ENCODE measurements at regions of chr2 and their contacts with region 1.

Region 1: GRCh38 chr2:120312861-120313694 is 32.9 kb upstream of the INHBB start:
- DNase-seq: peak; percentile 77
- H3K4me3 ChIP-seq: no peak overlapping the region
- H3K27ac ChIP-seq: no peak overlapping the region
- H3K4me1 ChIP-seq: peaks cover 26% of the 10 kb centered on the region
- CTCF ChIP-seq: peak; percentile 92

Region 2: DNA sequence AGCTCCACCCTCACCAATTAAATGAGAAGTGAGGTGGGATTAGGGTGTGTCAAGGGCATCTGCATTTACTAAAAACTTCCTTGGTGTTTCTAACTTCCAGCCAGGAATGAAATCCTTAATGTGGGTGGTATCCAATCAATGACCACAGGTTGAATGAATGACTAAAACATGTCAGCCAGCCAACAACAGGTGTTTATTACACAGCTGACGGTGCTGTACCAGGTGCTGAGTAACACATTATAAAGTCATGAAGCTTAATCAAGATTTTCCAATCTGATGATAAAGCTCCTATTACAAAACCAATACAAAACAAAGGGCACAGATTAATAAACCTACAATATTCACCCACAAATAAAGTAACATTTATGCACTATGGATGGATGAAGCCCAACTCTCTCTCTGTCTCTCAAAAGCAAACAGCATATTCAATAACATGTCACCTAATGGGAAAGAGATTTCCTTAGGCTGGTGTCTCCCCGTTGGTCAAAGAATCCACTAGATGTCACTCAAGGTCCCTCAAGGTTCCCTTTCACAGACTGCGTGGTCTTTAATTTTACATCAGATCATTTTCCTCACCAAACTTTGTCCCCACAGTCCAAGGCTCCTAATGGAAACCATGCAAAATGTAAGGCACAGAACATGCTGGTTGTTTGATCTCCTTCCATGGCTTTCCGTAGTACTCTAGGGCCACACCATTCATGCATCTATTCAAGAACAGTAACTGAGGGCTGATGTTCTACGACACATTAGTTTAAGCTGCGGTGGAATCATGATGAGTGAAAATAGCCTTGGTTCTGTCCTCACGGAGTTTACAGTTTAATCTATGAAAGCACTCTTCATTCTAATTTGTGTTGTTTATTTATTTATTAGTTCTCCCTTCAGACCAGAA is 559.8 kb before region 1 on chr2:
- CTCF ChIA-PET with region 1: no interaction called
- POLR2A ChIA-PET with region 1: no interaction called
- intact Hi-C with region 1: loop called (anchors 2 kb)
- DNase-seq: peak; percentile 65
- H3K4me3 ChIP-seq: no peak overlapping the region
- H3K27ac ChIP-seq: no peak overlapping the region
- H3K4me1 ChIP-seq: no peaks in the 10 kb centered on the region
- CTCF ChIP-seq: peak; percentile 89

Region 3: DNA sequence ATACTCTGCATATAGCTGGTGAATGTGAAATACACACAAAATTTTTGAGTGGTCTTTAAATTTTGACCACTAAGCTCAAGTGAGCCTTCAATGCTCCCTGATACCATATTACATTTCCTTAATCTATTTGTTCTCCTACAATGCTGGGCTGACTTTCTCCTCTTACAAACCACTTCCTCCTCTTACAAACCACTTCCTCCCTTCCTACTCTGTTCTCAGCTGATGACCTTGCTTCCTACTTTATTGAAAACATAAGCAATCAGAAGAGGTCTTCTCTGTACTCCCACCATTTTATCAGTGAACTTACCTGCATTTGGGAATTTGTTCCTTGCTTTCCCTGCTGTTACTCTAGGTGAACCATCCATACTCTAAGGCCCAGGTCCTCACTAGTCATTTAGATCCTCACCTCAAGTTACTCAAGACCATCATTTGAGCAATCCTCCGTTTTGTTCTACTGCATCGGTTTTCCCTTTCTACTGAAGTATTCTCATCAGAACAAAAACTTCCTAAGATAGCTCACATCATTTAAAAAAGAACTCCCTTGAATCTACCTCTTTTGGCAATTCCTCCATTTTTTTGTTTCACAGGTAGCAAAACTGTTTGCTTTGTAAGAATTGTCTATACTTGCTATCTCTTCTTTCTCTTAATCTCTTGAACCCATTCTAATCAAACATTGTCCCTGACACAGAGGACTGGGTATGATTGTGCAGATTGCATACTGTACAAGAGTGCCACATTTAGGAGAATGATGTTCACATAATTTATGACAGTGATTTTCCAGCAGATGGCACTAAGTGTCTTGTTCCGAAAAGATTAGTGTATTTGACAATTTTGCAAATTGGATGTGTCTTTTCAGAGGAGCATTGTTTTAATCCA is 203.7 kb before region 1 on chr2:
- CTCF ChIA-PET with region 1: no interaction called
- POLR2A ChIA-PET with region 1: no interaction called
- intact Hi-C with region 1: loop called (anchors 1 kb)
- DNase-seq: peak; percentile 68
- H3K4me3 ChIP-seq: peak overlapping the region; percentile 17
- H3K27ac ChIP-seq: no peak overlapping the region
- H3K4me1 ChIP-seq: peaks cover 17% of the 10 kb centered on the region
- CTCF ChIP-seq: peak; percentile 86

Region 4: DNA sequence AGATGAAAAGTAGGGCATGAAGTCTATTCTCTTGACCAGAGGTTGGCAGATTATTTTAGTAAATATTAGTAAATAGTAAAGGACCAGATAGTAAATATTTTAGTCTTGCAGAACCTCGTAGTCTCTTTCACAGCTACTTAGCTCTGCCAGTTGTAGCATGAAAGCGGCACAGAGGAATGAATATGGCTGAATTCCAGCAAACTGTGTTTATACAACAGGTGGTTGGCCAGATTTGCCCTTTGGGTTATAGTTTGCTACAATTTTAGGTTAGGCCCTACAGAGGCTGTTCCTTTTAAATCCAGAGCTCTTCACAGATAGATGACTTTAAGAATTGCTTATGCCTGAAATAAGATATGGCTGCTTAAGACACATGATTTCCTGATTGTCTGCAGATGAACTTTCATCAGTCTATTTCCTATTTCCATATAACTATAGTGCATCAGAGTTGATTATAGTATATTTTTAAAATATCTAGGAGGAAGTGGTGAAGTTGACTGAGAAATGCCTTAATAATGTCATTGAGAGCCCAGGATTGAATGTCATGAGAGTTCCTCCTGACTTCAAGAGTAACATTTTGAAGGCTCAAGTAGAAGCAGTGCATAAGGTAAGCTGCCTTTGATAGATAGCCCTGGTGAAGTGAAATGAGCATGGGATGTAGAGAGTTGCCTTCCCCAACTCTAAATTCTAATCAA is 170.4 kb before region 1 on chr2:
- CTCF ChIA-PET with region 1: no interaction called
- POLR2A ChIA-PET with region 1: no interaction called
- intact Hi-C with region 1: no loop called
- DNase-seq: no peak
- H3K4me3 ChIP-seq: no peak overlapping the region
- H3K27ac ChIP-seq: no peak overlapping the region
- H3K4me1 ChIP-seq: no peaks in the 10 kb centered on the region
- CTCF ChIP-seq: no peak

Region 5: DNA sequence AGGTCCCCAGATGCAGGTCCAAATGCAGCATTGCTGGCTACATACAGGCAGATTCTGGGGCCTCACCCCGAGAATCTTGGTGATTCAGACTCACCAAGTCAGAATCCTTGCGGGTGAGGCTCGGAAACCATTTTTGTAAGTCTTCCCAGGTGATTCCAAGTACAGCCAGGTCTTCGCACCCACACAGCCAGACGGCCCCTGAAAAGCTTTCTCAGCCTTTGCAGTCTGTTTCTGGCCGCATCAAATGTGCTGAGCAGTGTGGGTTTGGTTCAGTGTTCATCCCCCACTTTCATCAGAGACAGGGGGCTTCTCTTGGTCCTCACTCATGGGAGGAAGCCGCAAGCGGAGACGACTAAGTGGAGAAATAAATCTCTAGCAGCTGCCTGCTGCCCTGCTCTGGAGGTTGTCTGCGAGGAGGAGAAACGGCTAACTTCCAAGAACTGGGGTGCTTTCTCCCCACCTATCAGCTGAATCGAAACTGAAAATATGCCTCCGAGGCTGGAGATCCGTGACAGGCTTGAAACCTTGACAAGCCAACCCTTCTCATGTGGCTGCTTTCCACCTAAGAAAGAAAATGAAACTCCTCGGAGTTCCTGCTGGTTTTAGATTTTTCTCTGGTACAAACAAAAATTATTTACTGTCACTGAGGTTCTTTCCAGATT is 81.0 kb before region 1 on chr2:
- CTCF ChIA-PET with region 1: no interaction called
- POLR2A ChIA-PET with region 1: interaction called, 5 read pairs
- intact Hi-C with region 1: loop called (anchors 1 kb)
- DNase-seq: peak; percentile 72
- H3K4me3 ChIP-seq: peak overlapping the region; percentile 64
- H3K27ac ChIP-seq: peak overlapping the region; percentile 46
- H3K4me1 ChIP-seq: peaks cover 53% of the 10 kb centered on the region
- CTCF ChIP-seq: no peak

Region 6: DNA sequence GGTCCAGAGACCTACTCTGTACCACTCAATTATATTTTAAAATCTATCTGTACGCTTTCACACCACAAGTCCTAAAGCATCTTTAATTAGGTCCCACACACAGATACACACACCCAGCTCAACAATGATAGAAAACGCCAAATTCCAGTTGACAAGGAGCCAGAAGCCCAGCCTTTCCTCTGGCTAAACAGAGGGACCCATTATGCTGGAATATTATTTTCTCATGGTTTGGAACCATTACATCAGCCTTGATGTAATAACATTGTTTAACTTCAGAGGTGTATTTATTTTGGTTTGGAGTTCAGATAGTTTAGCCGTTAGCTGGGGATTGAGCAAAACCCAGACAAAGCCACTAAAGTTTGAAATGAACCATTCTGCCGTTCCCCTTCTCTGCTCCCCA is 18.8 kb after region 1 on chr2:
- CTCF ChIA-PET with region 1: no interaction called
- POLR2A ChIA-PET with region 1: no interaction called
- intact Hi-C with region 1: no loop called
- DNase-seq: no peak
- H3K4me3 ChIP-seq: no peak overlapping the region
- H3K27ac ChIP-seq: no peak overlapping the region
- H3K4me1 ChIP-seq: no peaks in the 10 kb centered on the region
- CTCF ChIP-seq: no peak

Region 7: GRCh38 chr2:120348134-120348736 is 35.2 kb after region 1 on chr2:
- CTCF ChIA-PET with region 1: no interaction called
- POLR2A ChIA-PET with region 1: no interaction called
- intact Hi-C with region 1: no loop called
- DNase-seq: no peak
- H3K4me3 ChIP-seq: no peak overlapping the region
- H3K27ac ChIP-seq: no peak overlapping the region
- H3K4me1 ChIP-seq: no peaks in the 10 kb centered on the region
- CTCF ChIP-seq: no peak

Region 8: DNA sequence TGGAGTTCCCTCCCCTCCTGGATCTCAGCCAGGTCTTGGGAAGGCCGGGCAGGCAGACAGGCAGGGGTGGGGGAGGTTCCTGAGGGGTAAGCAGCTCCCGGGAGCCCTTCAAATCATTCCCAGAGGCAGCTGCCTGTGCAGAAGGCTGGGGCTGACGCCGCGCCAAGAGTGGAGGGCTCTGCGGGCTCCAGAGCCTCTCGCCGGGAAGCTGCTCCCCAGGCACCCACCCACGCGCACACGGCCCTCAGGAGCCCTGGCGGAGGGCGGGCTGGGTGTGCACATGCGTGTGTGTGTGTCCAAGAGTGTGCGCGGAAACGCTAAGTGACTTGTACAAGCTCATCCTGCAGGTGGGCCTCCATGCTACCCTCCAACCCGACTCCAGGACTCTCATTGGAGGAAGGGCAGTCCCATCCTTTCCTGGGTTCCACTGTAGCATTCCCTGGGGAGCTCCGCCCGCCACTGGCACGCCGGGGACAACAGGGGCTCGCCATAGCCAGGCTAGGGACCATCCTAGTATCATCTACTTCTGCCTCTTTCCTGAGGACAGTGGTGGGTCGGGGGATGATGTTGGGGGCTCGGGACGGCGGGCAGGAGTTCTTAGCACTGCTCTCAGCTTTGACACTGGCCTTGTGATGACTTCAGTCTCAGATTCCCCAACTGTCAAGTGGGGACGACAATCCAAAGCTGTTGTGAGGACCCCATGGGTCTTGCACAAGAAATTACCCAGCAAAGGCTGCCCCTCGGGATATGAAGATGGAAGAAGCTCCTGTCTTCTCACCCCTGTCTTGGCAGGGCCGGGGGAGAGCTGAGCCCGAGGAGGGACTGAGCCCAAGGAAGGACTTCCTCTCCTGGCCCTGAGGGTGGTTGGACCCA is 83.2 kb after region 1 on chr2:
- CTCF ChIA-PET with region 1: no interaction called
- POLR2A ChIA-PET with region 1: no interaction called
- intact Hi-C with region 1: no loop called
- DNase-seq: no peak
- H3K4me3 ChIP-seq: no peak overlapping the region
- H3K27ac ChIP-seq: no peak overlapping the region
- H3K4me1 ChIP-seq: no peaks in the 10 kb centered on the region
- CTCF ChIP-seq: no peak

Measured in OCI-LY7 (cell line).